Calu3 (cell line): ENCODE measurements at regions of chr3 and their contacts with region 1.

Region 1: DNA sequence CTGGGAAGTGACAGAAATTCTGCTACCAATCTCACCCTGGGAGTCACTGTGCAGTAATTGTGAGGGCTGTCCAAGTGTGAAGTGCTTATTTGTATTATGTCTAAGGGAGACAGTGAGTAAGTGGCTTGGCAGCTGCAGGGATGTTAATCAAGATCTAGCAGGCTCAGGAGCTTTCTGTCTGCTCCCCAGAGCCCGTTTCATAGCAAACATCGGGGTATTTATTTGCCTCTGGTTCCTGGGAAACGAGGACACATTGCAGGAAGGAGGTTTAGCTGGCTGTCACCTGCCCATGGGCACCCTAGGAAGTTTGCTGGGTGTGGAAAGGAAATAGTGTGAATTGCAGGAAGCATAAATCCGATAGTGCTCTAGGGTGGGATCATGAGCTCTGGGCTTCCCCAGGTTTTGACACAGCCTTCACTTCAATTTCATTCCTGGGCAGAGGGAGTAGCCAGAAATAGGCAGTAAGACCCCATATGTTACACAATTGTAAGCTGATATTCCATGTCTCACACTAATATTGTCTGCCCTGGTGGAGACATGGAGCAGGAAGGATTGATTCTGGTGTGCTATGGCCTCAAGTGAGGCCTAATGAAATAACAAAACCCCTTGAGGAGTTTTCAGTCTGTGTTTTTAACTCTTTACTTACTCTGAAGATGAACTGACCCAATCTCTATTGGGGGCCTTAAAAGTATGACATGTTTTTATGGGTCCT is 74.1 kb upstream of the MITF start:
- DNase-seq: peak; percentile 56
- H3K4me3 Mint-ChIP-seq: no peak overlapping the region
- H3K27ac Mint-ChIP-seq: peak overlapping the region; percentile 74
- H3K4me1 Mint-ChIP-seq: peaks cover 39% of the 10 kb centered on the region
- H3K27me3 Mint-ChIP-seq: no peaks in the 10 kb centered on the region
- CTCF ChIP-seq: no peak

Region 2: DNA sequence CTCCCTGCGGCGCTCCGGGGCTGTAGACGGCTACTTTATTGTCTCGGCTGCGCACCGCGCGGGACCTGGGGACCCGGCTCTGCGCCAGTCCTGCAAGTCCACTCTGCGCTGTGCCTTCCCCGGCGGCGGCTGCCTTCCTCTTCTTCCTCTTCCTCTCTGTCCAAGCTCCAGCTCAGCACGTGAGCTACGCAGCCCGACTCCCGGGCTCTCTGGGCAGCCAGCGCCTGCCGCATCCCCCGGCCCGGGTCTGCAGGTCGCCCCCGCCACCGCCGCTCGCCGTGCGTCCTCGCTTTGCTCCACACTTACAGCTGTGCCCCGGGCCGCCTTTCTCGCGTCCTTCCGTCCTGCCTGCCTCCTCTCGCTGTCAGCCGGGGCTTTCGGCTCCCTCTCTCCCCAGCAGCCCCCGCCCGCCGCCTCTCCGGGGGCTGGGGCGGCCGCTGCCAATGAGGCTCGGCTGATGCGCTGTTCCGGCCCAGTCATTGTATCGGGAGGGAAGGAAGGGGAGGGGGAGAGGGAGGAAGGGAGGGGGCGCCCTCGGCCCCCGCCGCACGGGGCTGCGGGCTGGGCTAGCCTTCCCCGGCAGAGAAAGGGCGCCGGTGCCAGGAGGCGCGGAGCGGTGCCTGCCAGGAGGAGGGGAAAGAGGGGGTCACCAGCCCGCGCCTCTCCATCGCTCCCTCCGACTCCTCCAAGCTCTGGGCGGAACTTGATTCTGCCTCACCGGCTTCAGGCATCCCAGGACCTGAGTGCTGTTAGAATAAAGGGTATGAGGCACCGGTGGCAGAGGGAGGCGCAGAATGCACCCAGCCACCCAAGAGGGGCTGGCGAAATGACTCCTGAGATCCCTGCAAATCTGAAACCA is 122.7 kb before region 1 on chr3:
- CTCF ChIA-PET with region 1: no interaction called
- intact Hi-C with region 1: loop called (anchors 10 kb)
- DNase-seq: no peak
- H3K4me3 Mint-ChIP-seq: peak overlapping the region; percentile 60
- H3K27ac Mint-ChIP-seq: no peak overlapping the region
- H3K4me1 Mint-ChIP-seq: peaks cover 12% of the 10 kb centered on the region
- H3K27me3 Mint-ChIP-seq: peaks cover 52% of the 10 kb centered on the region
- CTCF ChIP-seq: no peak